ENCODE measurements at regions of chr11 and their contacts with region 1.

Region 1: GRCh38 chr11:69131644-69132300 is 24.0 kb upstream of the SMIM38 start:
- DNase-seq: peak; percentile 17
- H3K4me3 ChIP-seq: no peak overlapping the region
- CTCF ChIP-seq: peak; percentile 88

Region 2: DNA sequence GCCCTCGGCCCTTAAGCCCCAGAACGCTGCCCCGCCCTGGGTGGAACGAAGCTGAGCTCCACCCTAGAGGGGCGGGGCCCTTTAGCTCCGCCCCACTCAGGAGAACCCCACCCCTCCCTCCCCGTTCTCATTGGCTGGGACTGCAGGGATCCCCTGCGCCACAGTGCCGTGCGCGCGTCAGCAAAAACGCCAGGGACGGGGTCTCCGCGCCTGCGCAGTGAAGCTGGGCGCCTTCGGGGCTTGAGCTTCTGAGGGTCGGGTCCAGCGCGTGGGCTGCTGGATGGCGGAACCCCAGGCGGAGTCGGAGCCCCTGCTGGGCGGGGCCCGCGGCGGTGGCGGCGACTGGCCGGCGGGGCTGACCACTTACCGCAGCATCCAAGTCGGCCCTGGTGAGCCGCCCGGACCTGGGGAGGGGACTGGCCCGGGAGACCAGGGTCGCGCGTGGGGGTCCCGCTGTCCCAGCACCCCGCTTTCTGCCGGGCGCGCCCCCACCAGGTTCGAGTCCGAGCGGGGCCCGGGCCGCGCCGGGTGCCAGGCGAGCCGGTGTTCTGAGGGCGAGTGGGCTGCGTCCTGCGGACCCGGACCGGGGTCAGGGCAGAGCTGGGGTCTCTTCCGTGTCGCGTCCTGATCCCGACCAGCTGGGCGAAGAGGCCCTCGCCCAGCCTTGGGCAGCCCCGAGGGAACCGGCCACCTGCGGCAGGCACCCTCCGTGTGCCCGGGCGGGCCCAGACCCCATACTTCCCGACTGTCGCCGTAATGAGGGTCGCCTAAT is 82.9 kb before region 1 on chr11 and contains the start of gene TPCN2:
- CTCF ChIA-PET with region 1: no interaction called
- POLR2A ChIA-PET with region 1: no interaction called
- DNase-seq: peak; percentile 65
- H3K4me3 ChIP-seq: peak within 1 kb of the TSS; percentile 80
- CTCF ChIP-seq: no peak

Region 3: GRCh38 chr11:69115586-69116560 is 15.9 kb before region 1 on chr11:
- CTCF ChIA-PET with region 1: interaction called, 17 read pairs
- POLR2A ChIA-PET with region 1: no interaction called
- DNase-seq: no peak
- H3K4me3 ChIP-seq: no peak overlapping the region
- CTCF ChIP-seq: no peak

Region 4: GRCh38 chr11:69145062-69145405 is 13.3 kb after region 1 on chr11:
- CTCF ChIA-PET with region 1: interaction called, 59 read pairs
- POLR2A ChIA-PET with region 1: no interaction called
- DNase-seq: peak; percentile 41
- H3K4me3 ChIP-seq: no peak overlapping the region
- CTCF ChIP-seq: no peak

Region 5: GRCh38 chr11:69157156-69157821 is 25.5 kb after region 1 on chr11:
- CTCF ChIA-PET with region 1: interaction called, 28 read pairs
- POLR2A ChIA-PET with region 1: no interaction called
- DNase-seq: no peak
- H3K4me3 ChIP-seq: no peak overlapping the region
- CTCF ChIP-seq: no peak

Region 6: DNA sequence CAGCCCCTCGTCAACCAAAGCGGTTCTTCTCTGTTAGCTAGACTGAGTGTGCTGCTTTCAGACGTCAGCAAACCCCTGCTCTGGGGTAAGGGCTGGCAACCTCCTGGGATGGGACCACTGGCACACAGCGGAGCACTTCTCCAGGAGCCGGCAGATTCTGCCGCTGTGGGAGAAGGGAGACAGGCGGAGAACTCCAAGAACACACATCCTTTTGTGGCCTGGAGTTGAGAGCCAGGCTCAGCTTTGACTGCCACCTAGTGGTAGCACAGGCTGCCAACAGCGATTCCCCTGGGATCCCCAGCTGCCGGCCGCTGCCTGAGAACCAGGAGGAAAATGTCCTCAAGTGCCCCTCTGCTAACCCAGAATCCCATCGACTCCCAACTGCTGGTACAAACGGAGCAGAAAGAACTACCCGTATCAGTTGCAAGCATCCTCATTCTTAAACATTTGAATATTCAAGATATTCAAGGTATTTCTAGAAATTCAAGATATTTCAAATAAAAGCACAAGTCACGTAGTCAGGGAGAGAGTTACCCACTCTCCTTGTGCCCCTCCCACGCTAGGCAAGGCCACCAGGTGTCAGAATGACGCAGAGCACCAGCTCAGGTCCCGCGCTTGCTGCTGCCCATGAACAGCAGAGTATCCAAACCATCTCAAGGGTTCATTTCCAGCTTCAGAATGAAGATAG is 538.5 kb after region 1 on chr11:
- CTCF ChIA-PET with region 1: interaction called, 29 read pairs
- POLR2A ChIA-PET with region 1: no interaction called
- DNase-seq: peak; percentile 31
- H3K4me3 ChIP-seq: no peak overlapping the region
- CTCF ChIP-seq: peak; percentile 96

Measured in AG04449 (cell line).